Dendritic cell treated with granulocyte-macrophage colony-stimulating factor and Interleukin-4, amounts not matched to agents 40 ng/mL and 50 ng/mL, for 4 days (primary cell): ENCODE measurements at regions of chr17 and their contacts with region 1.

Region 1: GRCh38 chr17:68457539-68458259 is 403 bp upstream of the WIPI1 start:
- H3K4me3 Mint-ChIP-seq: peak overlapping the region; percentile 73
- H3K27ac Mint-ChIP-seq: peak overlapping the region; percentile 89
- H3K4me1 Mint-ChIP-seq: peaks cover 49% of the 10 kb centered on the region
- H3K27me3 Mint-ChIP-seq: peaks cover 4% of the 10 kb centered on the region

Region 2: GRCh38 chr17:67959288-67959900 is 498.3 kb before region 1 on chr17:
- intact Hi-C with region 1: loop called (anchors 5 kb)
- H3K4me3 Mint-ChIP-seq: no peak overlapping the region
- H3K27ac Mint-ChIP-seq: no peak overlapping the region
- H3K4me1 Mint-ChIP-seq: peaks cover 5% of the 10 kb centered on the region
- H3K27me3 Mint-ChIP-seq: no peaks in the 10 kb centered on the region

Region 3: GRCh38 chr17:68035523-68036303 is 422.0 kb before region 1 on chr17 and contains the start of gene KPNA2:
- intact Hi-C with region 1: loop called (anchors 10 kb)
- H3K4me3 Mint-ChIP-seq: peak within 1 kb of the TSS; percentile 93
- H3K27ac Mint-ChIP-seq: peak within 1 kb of the TSS; percentile 87
- H3K4me1 Mint-ChIP-seq: peaks cover 16% of the 10 kb centered on the region
- H3K27me3 Mint-ChIP-seq: no peaks in the 10 kb centered on the region

Region 4: GRCh38 chr17:68260051-68260762 is 197.5 kb before region 1 on chr17:
- intact Hi-C with region 1: loop called (anchors 5 kb)
- H3K4me3 Mint-ChIP-seq: no peak overlapping the region
- H3K27ac Mint-ChIP-seq: no peak overlapping the region
- H3K4me1 Mint-ChIP-seq: peaks cover 35% of the 10 kb centered on the region
- H3K27me3 Mint-ChIP-seq: peaks cover 14% of the 10 kb centered on the region

Region 5: GRCh38 chr17:68435876-68436842 is 21.5 kb before region 1 on chr17:
- intact Hi-C with region 1: loop called (anchors 2 kb)
- H3K4me3 Mint-ChIP-seq: no peak overlapping the region
- H3K27ac Mint-ChIP-seq: no peak overlapping the region
- H3K4me1 Mint-ChIP-seq: peaks cover 34% of the 10 kb centered on the region
- H3K27me3 Mint-ChIP-seq: no peaks in the 10 kb centered on the region

Region 6: GRCh38 chr17:68759343-68760132 is 301.8 kb after region 1 on chr17:
- intact Hi-C with region 1: loop called (anchors 10 kb)
- H3K4me3 Mint-ChIP-seq: peak overlapping the region; percentile 79
- H3K27ac Mint-ChIP-seq: peak overlapping the region; percentile 95
- H3K4me1 Mint-ChIP-seq: peaks cover 15% of the 10 kb centered on the region
- H3K27me3 Mint-ChIP-seq: no peaks in the 10 kb centered on the region